Activated naive CD4-positive, alpha-beta T cell treated with anti-CD3 and anti-CD28 coated beads for 36 hours (primary cell): ENCODE measurements at regions of chr7 and their contacts with region 1.

Region 1: GRCh38 chr7:65981965-65982792 is at the start of gene GUSB:
- DNase-seq: peak; percentile 93
- H3K4me3 Mint-ChIP-seq: peak within 1 kb of the TSS; percentile 87
- H3K27ac Mint-ChIP-seq: peak within 1 kb of the TSS; percentile 78
- H3K4me1 Mint-ChIP-seq: peaks cover 8% of the 10 kb centered on the region
- H3K27me3 Mint-ChIP-seq: no peaks in the 10 kb centered on the region
- total RNA-seq, gene GUSB: 42.8 to 44.0 TPM

Region 2: DNA sequence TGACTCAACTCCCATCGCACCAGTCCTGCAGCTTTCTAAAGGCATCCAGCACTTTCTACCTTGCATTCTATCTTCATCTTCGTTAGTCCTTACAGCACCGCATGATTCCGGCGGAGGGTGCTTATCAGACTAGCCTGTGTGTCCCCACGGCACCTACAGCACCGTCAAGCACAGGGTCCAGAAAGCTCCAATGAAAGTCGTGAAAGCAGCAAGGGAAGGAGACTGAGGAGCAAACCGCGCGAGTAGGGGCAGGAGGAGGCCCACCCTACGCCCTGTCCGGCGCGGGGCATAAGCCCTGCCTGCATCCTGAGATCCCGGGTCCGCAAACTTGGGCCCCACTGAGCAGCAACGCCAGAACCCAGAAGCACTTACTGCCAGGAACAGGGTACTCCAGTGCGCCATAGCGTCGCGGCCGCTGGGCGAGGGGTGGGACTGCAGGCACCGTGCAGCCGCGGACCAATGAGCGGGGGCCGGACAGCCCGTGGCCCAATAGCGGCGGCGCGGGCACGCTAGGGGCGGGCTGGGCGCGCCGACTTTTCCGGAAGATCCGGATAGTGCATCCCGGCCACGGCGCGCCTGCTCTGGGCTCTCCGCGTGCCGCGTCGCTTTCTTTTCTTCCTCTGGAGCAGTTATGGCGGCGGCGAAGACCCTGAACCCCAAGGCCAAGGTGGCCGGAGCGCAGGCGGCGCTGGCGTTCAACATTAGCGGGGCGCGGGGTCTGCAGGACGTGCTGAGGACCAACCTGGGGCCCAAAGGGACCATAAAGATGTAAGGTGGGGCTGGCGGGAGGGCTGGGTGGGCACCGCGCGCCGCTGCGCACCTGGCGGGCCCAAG is 231.5 kb before region 1 on chr7:
- CTCF ChIA-PET with region 1: no interaction called
- intact Hi-C with region 1: loop called (anchors 1 kb)
- DNase-seq: peak; percentile 89
- H3K4me3 Mint-ChIP-seq: peak overlapping the region; percentile 84
- H3K27ac Mint-ChIP-seq: peak overlapping the region; percentile 98
- H3K4me1 Mint-ChIP-seq: peaks cover 40% of the 10 kb centered on the region
- H3K27me3 Mint-ChIP-seq: no peaks in the 10 kb centered on the region

Region 3: GRCh38 chr7:66075590-66076461 is 93.6 kb after region 1 on chr7 and contains the start of gene ASL:
- CTCF ChIA-PET with region 1: interaction called, 3 read pairs
- intact Hi-C with region 1: loop called (anchors 1 kb)
- DNase-seq: peak; percentile 87
- H3K4me3 Mint-ChIP-seq: peak within 1 kb of the TSS; percentile 70
- H3K27ac Mint-ChIP-seq: no peak within 1 kb of the TSS
- H3K4me1 Mint-ChIP-seq: peaks cover 12% of the 10 kb centered on the region
- H3K27me3 Mint-ChIP-seq: no peaks in the 10 kb centered on the region
- total RNA-seq, gene ASL: 12.7 to 13.6 TPM

Region 4: DNA sequence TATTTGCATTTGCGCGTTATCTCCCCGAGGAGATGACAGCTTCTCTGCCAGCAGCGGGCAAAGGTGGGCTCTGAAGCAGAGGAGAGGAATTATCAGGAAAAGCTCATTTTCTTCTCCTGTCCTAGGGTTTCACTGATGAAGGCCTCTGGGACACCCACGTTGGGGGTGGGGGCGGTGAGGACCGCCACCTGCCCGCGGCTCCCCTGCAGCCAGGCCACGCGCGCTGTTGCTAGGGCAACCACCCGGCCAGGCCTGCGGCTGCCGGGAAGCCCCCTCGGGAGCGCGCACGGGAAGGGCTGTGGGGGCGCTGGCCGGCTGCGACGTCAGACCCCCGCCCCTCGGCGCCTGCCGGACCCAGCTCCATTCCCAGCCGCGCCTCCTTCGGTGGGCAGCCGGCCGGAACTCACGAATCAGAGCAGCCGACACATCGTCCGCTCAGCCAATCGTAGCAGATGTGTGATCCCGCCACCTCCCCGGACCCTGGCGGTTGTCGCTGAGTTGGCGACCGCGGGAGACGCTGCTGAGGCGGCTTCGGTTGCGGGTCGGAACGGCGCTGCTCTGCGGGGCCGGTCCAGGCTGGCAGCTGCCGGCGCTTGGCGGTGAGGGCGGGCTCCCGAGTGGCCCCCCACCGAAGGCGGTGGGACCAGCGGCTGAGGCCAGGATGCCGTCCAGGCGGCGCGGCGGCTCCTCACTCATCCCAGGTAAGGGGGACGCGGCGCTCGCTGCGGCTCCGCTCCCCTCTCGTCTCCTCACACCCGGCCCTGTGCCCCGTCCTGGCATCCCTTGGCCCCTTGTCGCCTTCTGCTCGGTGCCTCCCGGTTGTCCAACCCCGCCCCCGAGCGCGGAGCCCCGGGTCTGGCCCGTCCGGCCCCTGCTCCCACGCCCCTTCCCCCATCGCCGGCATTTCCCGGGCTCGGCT is 222.9 kb after region 1 on chr7 and contains the start of gene TPST1:
- CTCF ChIA-PET with region 1: no interaction called
- intact Hi-C with region 1: loop called (anchors 2 kb)
- DNase-seq: peak; percentile 84
- H3K4me3 Mint-ChIP-seq: peak within 1 kb of the TSS; percentile 88
- H3K27ac Mint-ChIP-seq: no peak within 1 kb of the TSS
- H3K4me1 Mint-ChIP-seq: peaks cover 29% of the 10 kb centered on the region
- H3K27me3 Mint-ChIP-seq: peaks cover 13% of the 10 kb centered on the region
- total RNA-seq, gene TPST1: 1.9 to 3.8 TPM